ENCODE measurements at regions of chrX and their contacts with region 1.

Region 1: DNA sequence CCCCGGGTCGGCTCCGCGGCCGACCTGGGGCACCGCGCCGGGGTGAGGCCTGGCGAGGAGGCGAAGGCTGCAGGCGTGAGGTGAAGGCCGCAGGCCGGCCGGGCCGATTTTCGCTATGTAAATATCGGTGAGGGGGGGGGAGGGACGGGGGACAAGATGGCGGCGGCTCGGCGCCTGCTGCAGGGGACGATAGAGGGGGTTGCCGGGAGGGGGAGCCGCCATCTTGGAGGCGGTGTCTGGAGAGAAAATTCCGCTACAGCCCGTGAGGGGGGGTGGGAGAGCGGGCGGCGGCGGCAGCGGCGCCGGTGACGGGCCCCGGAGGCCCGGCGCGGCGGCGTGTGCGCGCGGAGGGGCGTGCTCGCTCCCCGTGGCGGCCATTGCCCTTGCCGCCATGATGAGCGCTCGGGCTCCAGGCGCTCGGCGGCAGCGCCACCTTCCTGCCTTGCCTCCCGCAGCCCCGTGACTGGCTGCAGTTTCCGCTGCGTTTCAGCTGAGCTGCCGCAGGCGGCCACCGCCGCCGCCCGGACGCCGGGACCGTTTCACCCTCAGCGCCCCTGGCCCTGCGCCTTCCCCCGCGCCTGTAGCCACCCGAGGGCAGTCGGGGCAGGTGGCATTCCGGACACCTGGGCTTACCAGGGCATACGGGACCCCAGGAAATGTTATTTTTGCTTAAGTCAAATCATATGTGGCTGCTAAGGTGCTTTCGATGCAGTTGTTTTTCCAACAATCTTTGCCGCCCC is 692 bp downstream of the ZFX start:
- DNase-seq: peak; percentile 89
- H3K4me3 Mint-ChIP-seq: peak overlapping the region; percentile 80
- H3K27ac Mint-ChIP-seq: peak overlapping the region; percentile 89
- H3K4me1 Mint-ChIP-seq: peaks cover 56% of the 10 kb centered on the region
- H3K27me3 Mint-ChIP-seq: no peaks in the 10 kb centered on the region

Region 2: GRCh38 chrX:23907498-23908218 is 242.6 kb before region 1 on chrX and contains the starts of genes APOO and CXorf58:
- CTCF ChIA-PET with region 1: no interaction called
- intact Hi-C with region 1: loop called (anchors 1 kb)
- DNase-seq: peak; percentile 93
- H3K4me3 Mint-ChIP-seq: peak within 1 kb of the TSS; percentile 75
- H3K27ac Mint-ChIP-seq: peak within 1 kb of the TSS; percentile 91
- H3K4me1 Mint-ChIP-seq: peaks cover 21% of the 10 kb centered on the region
- H3K27me3 Mint-ChIP-seq: no peaks in the 10 kb centered on the region
- total RNA-seq, gene APOO: 41.3 to 49.5 TPM
- total RNA-seq, gene CXorf58: 0.20 TPM in 1 of 2 experiments, not detected in the other

Region 3: DNA sequence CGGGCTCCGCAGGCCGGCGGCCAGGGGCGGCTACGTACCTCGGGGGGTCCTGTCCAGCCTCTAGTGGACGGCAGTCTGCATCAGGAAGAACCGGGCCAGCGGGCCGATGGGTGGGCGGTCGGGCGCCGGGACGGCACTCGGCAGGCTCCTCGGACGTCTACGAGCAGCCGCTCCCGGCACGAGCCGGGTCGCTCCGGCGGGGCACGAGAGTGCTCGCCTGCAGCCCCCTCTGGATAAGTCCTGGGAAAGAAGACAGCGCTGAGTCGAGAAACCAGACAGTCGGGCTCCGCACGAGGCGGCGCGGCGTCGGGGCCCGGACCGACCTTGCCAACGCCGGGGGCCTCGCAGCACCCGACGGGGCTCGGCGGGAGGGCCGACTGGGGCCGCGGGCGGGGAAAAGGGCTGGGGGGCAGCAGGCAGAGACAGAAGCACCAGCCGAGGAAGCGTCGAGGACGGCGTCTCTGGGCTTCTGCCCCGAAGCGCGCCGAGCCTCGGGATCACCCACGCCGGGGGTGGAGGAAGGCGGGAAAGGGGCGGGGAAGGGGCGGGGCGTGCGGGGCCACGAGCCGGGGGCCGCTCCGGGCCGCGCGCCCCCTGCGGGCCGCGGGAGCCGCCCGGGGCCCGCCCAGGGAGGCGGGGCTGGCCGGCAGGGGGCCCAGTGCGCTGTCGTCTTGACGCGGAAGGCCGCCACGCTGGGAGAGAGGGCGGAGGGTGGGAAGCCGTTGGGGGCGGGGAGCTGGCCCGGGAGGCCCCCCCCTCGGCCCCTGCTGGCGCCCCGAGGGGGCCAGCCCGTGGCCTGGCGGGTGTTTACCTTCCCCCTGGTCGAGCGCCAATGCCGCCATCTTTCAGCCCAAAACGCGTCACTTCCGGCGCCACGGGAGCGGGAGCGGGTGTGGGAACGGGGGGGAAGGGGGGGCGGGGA is 125.1 kb before region 1 on chrX:
- CTCF ChIA-PET with region 1: no interaction called
- intact Hi-C with region 1: loop called (anchors 1 kb)
- DNase-seq: peak; percentile 89
- H3K4me3 Mint-ChIP-seq: peak overlapping the region; percentile 85
- H3K27ac Mint-ChIP-seq: peak overlapping the region; percentile 71
- H3K4me1 Mint-ChIP-seq: peaks cover 20% of the 10 kb centered on the region
- H3K27me3 Mint-ChIP-seq: no peaks in the 10 kb centered on the region

Region 4: DNA sequence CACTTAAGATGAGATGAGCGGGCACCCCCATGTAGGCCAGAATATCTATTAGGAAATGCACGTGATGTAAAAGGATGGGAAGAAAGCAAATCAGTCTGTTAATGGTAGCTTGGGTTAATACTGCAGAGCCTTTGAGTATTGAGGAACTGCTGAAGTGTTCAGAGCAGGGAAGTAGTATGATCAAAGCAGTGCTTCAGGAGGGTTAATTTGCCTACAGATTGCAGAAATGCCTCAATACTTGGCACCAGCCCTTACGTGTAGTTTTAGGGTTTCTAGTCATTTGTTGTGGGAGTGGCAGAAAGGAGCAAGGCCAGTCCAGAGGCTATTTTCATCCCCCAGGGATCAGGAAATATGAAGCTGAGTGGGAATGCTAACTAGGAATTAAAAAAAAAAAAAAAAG is 19.0 kb after region 1 on chrX:
- CTCF ChIA-PET with region 1: interaction called, 3 read pairs
- intact Hi-C with region 1: loop called (anchors 1 kb)
- DNase-seq: peak; percentile 14
- H3K4me3 Mint-ChIP-seq: peak overlapping the region; percentile 6
- H3K27ac Mint-ChIP-seq: peak overlapping the region; percentile 84
- H3K4me1 Mint-ChIP-seq: peaks cover 62% of the 10 kb centered on the region
- H3K27me3 Mint-ChIP-seq: no peaks in the 10 kb centered on the region

Region 5: GRCh38 chrX:24479924-24480323 is 329.7 kb after region 1 on chrX:
- CTCF ChIA-PET with region 1: no interaction called
- intact Hi-C with region 1: loop called (anchors 1 kb)
- DNase-seq: peak; percentile 86
- H3K4me3 Mint-ChIP-seq: peak overlapping the region; percentile 69
- H3K27ac Mint-ChIP-seq: peak overlapping the region; percentile 96
- H3K4me1 Mint-ChIP-seq: peaks cover 69% of the 10 kb centered on the region
- H3K27me3 Mint-ChIP-seq: no peaks in the 10 kb centered on the region

Region 6: DNA sequence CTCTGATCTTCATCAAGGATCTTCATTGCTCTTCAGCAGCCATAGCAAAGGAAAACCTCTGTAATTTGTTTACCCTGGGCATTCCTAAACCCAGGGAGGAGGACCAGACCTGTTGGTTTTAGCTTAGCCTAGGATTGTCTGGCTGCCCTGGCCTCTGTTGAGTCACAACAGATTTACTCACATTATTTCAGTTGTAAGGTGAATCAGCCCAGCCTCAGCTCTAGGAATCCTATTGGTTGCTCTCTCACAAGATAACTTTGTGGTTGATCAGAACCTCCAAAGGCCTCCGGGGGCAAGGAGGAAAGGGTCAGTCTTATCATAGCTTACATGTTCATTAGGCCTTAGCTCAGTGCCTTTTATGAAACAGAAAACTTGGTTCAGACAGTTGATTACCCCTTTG is 355.8 kb after region 1 on chrX:
- CTCF ChIA-PET with region 1: no interaction called
- intact Hi-C with region 1: no loop called
- DNase-seq: peak; percentile 41
- H3K4me3 Mint-ChIP-seq: no peak overlapping the region
- H3K27ac Mint-ChIP-seq: peak overlapping the region; percentile 46
- H3K4me1 Mint-ChIP-seq: peaks cover 15% of the 10 kb centered on the region
- H3K27me3 Mint-ChIP-seq: no peaks in the 10 kb centered on the region

Measured in activated naive CD4-positive, alpha-beta T cell treated with anti-CD3 and anti-CD28 coated beads for 36 hours (primary cell).